H1 (cell line): ENCODE measurements at regions of chr2 and their contacts with region 1.

Region 1: DNA sequence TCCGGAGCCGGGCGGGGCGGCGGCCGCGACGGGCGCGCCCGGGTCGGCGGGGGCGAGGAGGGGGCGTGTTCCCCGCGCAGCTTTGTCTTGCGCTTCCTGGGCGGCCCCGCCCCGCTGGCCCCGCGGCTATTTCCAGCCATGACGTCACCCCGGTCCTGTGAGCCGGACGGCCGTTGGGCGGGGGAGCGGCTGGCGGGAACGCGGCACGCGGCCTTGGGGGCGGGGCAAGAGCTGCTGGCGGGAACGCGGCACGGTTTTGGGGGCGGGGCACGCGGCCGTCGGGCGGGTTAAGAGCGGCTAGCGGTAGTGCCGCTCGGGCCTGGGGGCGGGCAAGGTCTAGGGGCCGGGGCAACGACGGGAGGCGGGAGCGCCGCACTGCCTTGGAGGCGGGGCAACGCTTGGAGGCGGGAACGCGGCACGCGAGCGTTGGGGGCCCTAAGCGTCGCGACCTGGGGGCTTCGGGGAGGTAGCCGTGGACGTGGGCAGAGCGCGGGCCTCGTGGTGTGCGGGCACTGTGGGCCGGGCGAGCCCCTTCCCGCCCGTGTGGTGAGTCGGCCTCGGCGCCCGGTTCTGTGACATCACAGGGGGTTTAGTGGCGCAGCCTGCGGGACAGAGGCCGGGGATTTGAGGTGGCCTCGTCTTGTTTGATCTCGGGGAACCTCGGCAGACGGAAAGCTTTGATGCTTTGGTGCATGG is 704 bp downstream of the KLF11 start:
- DNase-seq: peak in 1 of 2 experiments; percentile 89
- H3K4me3 ChIP-seq: peak overlapping the region in 2 of 4 experiments; percentile 61; a peak in 4 of 8 replicates
- H3K27ac ChIP-seq: peak overlapping the region; percentile 58; the same call in 1 of the 2 replicates
- H3K4me1 ChIP-seq: peaks cover 0 to 5% (median 2%) of the 10 kb centered on the region in 4 experiments; a peak in 3 of 7 replicates
- H3K27me3 ChIP-seq: peaks cover 0 to 26% (median 18%) of the 10 kb centered on the region in 4 experiments; a peak in 6 of 7 replicates
- CTCF ChIP-seq: no peak
- EP300 ChIP-seq: no peak
- POLR2A ChIP-seq: no peak
- RAD21 ChIP-seq: no peak

Region 2: DNA sequence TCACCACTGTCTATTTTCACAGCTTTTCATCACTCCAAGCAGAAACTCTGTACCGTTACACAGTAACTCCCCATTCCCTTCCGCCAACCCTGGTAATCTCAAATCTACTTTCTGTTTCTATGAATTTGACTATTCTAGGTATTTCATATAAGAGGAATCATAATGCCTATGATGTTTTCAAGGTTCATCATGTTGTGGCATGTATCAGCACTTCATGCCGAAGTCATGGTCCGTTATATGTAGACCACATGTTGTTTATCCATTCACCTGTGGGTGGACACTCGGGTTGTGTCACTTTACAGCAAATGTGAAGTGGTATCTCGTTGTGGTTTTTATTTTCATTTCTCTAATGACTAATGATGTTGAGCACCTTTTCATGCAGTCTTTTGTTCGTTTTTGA is 599.0 kb before region 1 on chr2:
- CTCF ChIA-PET with region 1: no interaction called
- POLR2A ChIA-PET with region 1: no interaction called
- DNase-seq: no peak
- H3K4me3 ChIP-seq: no peak overlapping the region
- H3K27ac ChIP-seq: no peak overlapping the region
- H3K4me1 ChIP-seq: no peaks in the 10 kb centered on the region
- H3K27me3 ChIP-seq: no peaks in the 10 kb centered on the region; a peak in 1 of 7 replicates
- CTCF ChIP-seq: no peak
- EP300 ChIP-seq: no peak
- POLR2A ChIP-seq: no peak
- RAD21 ChIP-seq: no peak

Region 3: DNA sequence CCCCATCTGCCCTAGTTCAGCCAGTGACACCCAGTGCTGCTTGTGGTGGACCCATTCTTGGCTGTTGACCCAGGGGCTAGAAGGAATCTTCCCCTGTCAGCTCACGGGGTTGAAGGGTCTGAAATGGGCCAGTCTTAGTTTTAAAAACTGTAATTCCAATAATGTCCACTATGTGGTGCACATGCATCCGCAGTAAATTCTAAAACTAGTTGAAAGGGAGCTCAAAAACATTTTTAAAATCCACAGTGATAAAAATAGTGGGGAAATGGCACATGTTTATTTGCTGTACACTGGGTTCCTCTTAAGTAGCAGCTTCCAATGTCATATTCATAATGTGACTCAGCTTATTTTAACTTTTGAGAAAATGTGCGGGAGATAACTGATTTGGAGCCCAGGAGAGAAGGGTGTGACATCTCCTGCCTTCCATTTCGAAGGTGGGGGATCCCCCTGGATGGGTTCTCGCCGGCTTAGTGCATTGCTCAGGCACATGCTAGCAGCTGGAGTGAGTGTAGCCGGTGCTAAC is 59.8 kb before region 1 on chr2:
- CTCF ChIA-PET with region 1: interaction called, 59 read pairs
- POLR2A ChIA-PET with region 1: interaction called, 3 read pairs
- DNase-seq: no peak
- H3K4me3 ChIP-seq: no peak overlapping the region
- H3K27ac ChIP-seq: no peak overlapping the region
- H3K4me1 ChIP-seq: no peaks in the 10 kb centered on the region
- H3K27me3 ChIP-seq: no peaks in the 10 kb centered on the region; a peak in 1 of 7 replicates
- CTCF ChIP-seq: peak in 2 of 3 experiments; percentile 45 to 59; a peak in 3 of 4 replicates
- EP300 ChIP-seq: no peak
- POLR2A ChIP-seq: no peak
- RAD21 ChIP-seq: peak; percentile 47 to 51

Region 4: GRCh38 chr2:10028988-10029874 is 14.8 kb before region 1 on chr2:
- CTCF ChIA-PET with region 1: interaction called, 20 read pairs
- POLR2A ChIA-PET with region 1: interaction called, 19 read pairs
- DNase-seq: no peak
- H3K4me3 ChIP-seq: no peak overlapping the region
- H3K27ac ChIP-seq: no peak overlapping the region
- H3K4me1 ChIP-seq: peaks cover 0 to 17% (median 7%) of the 10 kb centered on the region in 4 experiments; a peak in 6 of 7 replicates
- H3K27me3 ChIP-seq: no peaks in the 10 kb centered on the region
- CTCF ChIP-seq: no peak; a peak in 1 of 4 replicates
- EP300 ChIP-seq: no peak
- POLR2A ChIP-seq: no peak
- RAD21 ChIP-seq: 0 out of 4 replicates have a peak, but pooled peaks of 1 of the 2 experiments have one; percentile 2

Region 5: GRCh38 chr2:10072656-10073480 is 28.8 kb after region 1 on chr2:
- CTCF ChIA-PET with region 1: interaction called, 51 read pairs
- POLR2A ChIA-PET with region 1: interaction called, 3 read pairs
- DNase-seq: peak; percentile 43 to 82
- H3K4me3 ChIP-seq: no peak overlapping the region
- H3K27ac ChIP-seq: no peak overlapping the region
- H3K4me1 ChIP-seq: peaks cover 0 to 12% (median 7%) of the 10 kb centered on the region in 4 experiments; a peak in 2 of 7 replicates
- H3K27me3 ChIP-seq: peaks cover 0 to under 1% (median 0%) of the 10 kb centered on the region in 4 experiments; a peak in 1 of 7 replicates
- CTCF ChIP-seq: peak; percentile 84 to 90 (median 89)
- EP300 ChIP-seq: no peak
- POLR2A ChIP-seq: no peak
- RAD21 ChIP-seq: peak; percentile 76 to 82